HepG2 (cell line): ENCODE measurements at regions of chrX and their contacts with region 1.

Region 1: GRCh38 chrX:109856974-109857373 is 123.9 kb upstream of the ACSL4 start:
- DNase-seq: peak; percentile 28
- ATAC-seq: no peak
- H3K4me3 ChIP-seq: no peak overlapping the region; a peak in 1 of 6 replicates
- H3K27ac ChIP-seq: peak overlapping the region; percentile 96
- H3K4me1 ChIP-seq: peaks cover 75% of the 10 kb centered on the region
- H3K27me3 ChIP-seq: no peaks in the 10 kb centered on the region
- CTCF ChIP-seq: peak; percentile 50
- EP300 ChIP-seq: no peak; a peak in 1 of 4 replicates
- POLR2A ChIP-seq: no peak
- RAD21 ChIP-seq: 0 out of 2 replicates have a peak, but pooled peaks have one; percentile 31

Region 2: GRCh38 chrX:109732780-109733657 is 124.0 kb before region 1 on chrX and contains the start of gene ACSL4:
- CTCF ChIA-PET with region 1: no interaction called
- POLR2A ChIA-PET with region 1: interaction called, 6 read pairs
- in situ Hi-C with region 1: loop called (anchors 10 kb)
- intact Hi-C with region 1: no loop called
- DNase-seq: peak; percentile 63
- ATAC-seq: peak; percentile 96
- H3K4me3 ChIP-seq: peak within 1 kb of the TSS; percentile 85 to 91 (median 89)
- H3K27ac ChIP-seq: peak within 1 kb of the TSS; percentile 91
- H3K4me1 ChIP-seq: peaks cover 44% of the 10 kb centered on the region
- H3K27me3 ChIP-seq: no peaks in the 10 kb centered on the region; a peak in 1 of 5 replicates
- CTCF ChIP-seq: no peak
- EP300 ChIP-seq: no peak; a peak in 1 of 4 replicates
- POLR2A ChIP-seq: peak; percentile 70 to 89
- RAD21 ChIP-seq: no peak
- total RNA-seq, gene ACSL4: 316 and 521 TPM in 2 replicates

Region 3: GRCh38 chrX:109797311-109797975 is 59.5 kb before region 1 on chrX:
- CTCF ChIA-PET with region 1: no interaction called
- POLR2A ChIA-PET with region 1: no interaction called
- in situ Hi-C with region 1: no loop called
- intact Hi-C with region 1: no loop called
- DNase-seq: peak; percentile 54
- ATAC-seq: peak; percentile 81
- H3K4me3 ChIP-seq: no peak overlapping the region
- H3K27ac ChIP-seq: peak overlapping the region; percentile 44
- H3K4me1 ChIP-seq: peaks cover 33% of the 10 kb centered on the region
- H3K27me3 ChIP-seq: no peaks in the 10 kb centered on the region
- CTCF ChIP-seq: no peak
- EP300 ChIP-seq: 0 out of 4 replicates have a peak, but pooled peaks of 1 of the 2 experiments have one; percentile 11
- POLR2A ChIP-seq: no peak
- RAD21 ChIP-seq: no peak

Region 4: GRCh38 chrX:109840585-109840984 is 16.4 kb before region 1 on chrX:
- CTCF ChIA-PET with region 1: no interaction called
- POLR2A ChIA-PET with region 1: no interaction called
- in situ Hi-C with region 1: no loop called
- intact Hi-C with region 1: no loop called
- DNase-seq: peak; percentile 17
- ATAC-seq: no peak
- H3K4me3 ChIP-seq: no peak overlapping the region
- H3K27ac ChIP-seq: no peak overlapping the region
- H3K4me1 ChIP-seq: peaks cover 45% of the 10 kb centered on the region
- H3K27me3 ChIP-seq: no peaks in the 10 kb centered on the region
- CTCF ChIP-seq: no peak
- EP300 ChIP-seq: no peak
- POLR2A ChIP-seq: no peak
- RAD21 ChIP-seq: no peak

Region 5: GRCh38 chrX:110226931-110227330 is 370.0 kb after region 1 on chrX:
- CTCF ChIA-PET with region 1: no interaction called
- POLR2A ChIA-PET with region 1: no interaction called
- in situ Hi-C with region 1: no loop called
- intact Hi-C with region 1: no loop called
- DNase-seq: no peak
- ATAC-seq: no peak
- H3K4me3 ChIP-seq: no peak overlapping the region
- H3K27ac ChIP-seq: no peak overlapping the region
- H3K4me1 ChIP-seq: no peaks in the 10 kb centered on the region
- H3K27me3 ChIP-seq: no peaks in the 10 kb centered on the region
- CTCF ChIP-seq: no peak
- EP300 ChIP-seq: no peak
- POLR2A ChIP-seq: no peak
- RAD21 ChIP-seq: no peak